Dorsolateral prefrontal cortex (tissue), 120 donors: ENCODE measurements at regions of chr22 and their contacts with region 1.

Region 1: GRCh38 chr22:44901301-44901700 is 108.5 kb downstream of the PHF21B start:
- DNase-seq: no peak
- H3K4me3 ChIP-seq: no peak overlapping the region
- H3K27ac ChIP-seq: no peak overlapping the region
- H3K27me3 ChIP-seq: no peaks in the 10 kb centered on the region
- CTCF ChIP-seq: no peak

Region 2: DNA sequence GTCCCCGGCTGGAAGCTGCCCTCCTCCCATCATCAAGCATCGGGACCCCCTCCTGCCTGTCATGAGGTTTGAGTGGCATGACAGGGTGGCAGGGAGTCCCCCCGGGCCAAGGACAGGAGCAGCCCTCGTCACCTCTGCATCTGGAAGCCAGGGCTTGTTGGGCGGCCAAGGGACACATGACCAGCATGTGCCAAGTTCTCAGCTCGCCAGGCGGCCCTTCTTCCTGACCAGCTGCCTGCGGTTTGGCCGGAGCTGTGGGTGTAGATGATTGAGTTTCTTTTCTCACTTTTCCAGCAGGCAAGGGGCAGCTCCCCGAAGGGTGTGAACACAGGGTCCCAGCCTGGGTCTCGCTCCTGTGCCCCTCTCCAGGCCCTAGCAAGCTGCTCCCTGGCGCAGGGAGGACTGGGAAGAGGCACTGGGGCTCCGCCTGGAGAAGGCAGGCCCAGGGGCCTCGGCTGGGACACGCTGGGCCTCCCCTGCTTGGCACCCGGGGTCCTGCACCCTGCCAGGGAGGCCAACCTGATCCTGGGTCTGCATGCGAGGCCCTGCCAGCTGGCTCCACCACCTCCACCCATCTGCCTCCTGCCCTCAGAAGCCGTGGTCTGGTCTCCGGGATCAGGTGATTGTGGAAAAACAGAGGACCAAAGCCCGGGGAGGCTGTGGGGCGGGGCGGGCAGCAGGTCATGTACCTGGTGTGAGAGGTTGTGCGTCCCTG is 135.6 kb before region 1 on chr22:
- intact Hi-C with region 1: no loop called
- DNase-seq: peak in 1 of 10 donors; percentile 35
- H3K4me3 ChIP-seq: no peak overlapping the region
- H3K27ac ChIP-seq: no peak overlapping the region
- H3K27me3 ChIP-seq: no peaks in the 10 kb centered on the region
- CTCF ChIP-seq: no peak

Region 3: DNA sequence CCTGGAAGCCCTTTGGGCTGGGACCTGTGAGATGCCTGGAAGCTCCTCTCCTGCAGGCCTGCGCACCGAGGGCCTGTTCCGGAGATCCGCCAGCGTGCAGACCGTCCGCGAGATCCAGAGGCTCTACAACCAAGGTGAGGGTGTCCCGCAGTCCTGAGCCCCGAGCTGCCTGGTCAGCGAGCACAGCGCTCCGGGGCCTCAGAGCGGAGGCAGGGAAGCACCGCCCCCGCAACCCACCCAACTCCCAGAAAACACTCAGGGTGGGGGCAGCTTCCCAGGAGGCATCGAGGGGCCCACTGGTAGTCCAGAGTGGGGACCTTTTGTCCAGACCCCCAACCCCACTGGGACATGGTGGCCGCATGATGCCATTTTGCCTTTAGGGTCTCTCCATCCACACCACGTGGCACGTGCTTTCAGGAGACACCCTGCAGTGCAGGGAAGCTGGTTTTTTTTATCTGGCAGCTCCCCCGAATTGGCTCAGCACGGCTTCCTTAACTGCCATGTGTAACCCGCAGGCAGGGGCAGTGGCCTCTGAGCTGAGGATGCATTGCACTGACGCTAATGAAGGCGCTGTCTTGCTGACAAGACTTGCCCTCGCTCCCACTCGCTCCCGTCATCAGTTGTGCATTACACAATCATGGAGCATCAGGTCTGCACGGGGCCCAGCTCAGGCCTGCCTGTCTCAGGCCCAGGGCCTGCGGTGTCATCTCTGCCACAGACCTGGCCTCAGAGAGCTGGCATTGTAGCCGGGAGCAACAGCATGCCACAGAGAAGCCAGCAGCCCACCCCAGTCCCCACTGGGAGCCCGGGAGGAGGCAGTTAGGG is 53.2 kb before region 1 on chr22:
- intact Hi-C with region 1: loop called in 1 of 2 experiments (anchors 10 kb)
- DNase-seq: no peak
- H3K4me3 ChIP-seq: no peak overlapping the region
- H3K27ac ChIP-seq: no peak overlapping the region
- H3K27me3 ChIP-seq: no peaks in the 10 kb centered on the region
- CTCF ChIP-seq: no peak

Region 4: DNA sequence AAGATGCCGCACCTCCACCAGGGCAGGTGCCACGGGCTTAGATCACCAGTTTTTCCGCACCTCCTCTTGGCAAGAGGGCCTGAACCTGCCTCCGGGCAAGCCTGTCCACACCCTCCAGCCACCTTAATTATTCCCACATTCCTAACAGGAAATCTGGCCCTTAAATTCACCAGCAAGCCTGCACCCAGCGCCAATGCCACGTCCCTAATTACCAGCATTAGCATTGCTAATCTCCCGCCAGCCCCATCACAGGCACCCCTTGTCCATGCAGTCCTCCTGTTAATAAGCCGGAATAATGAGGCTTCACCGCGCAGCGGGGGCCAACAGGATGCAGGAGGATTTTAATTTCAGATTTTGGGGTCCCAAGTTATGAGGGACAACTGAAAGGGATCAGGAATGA is 38.8 kb after region 1 on chr22:
- intact Hi-C with region 1: no loop called
- DNase-seq: no peak
- H3K4me3 ChIP-seq: no peak overlapping the region
- H3K27ac ChIP-seq: no peak overlapping the region
- H3K27me3 ChIP-seq: no peaks in the 10 kb centered on the region
- CTCF ChIP-seq: no peak

Region 5: DNA sequence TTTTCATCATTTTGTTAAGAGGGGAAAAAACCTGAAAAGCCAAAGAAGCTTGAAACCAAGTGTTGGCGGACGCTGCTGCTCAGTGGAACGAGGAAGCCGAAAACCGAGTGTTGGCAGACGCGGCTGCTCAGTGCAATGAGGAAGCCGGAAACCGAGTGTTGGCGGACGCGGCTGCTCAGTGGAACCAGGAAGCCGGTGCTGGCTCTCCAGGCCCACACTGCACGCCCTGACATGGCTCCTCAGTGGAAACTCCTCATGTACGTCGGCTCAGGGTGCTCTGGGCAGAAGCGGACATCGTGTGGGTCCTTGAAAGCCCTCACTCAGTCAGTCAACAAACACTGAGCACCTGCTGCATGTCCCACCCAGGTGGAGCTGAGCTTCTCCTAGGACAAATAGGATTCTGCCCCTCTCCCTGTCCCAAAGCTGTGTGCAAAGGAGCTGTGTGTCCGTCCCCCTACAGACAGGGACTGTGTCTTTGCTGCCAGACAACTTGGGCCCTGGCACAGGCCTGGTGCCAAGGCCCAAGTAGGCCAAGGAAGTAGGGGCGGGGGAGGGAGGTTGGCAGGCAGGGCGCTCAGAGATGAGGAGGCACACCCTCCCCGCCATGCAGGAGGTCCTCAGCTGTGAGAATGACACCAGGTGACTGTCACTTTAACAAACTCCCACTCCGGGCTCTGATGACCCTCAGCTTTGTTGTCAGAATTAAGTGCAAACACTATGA is 71.2 kb after region 1 on chr22:
- intact Hi-C with region 1: no loop called
- DNase-seq: peak in 3 of 10 donors; percentile 27 to 60 (median 53)
- H3K4me3 ChIP-seq: peak overlapping the region in 1 of 59 donors; percentile 4
- H3K27ac ChIP-seq: peak overlapping the region in 4 of 59 donors; percentile 18 to 57 (median 28)
- H3K27me3 ChIP-seq: peaks cover 0 to 3% (median 0%) of the 10 kb centered on the region in 45 donors
- CTCF ChIP-seq: no peak